Ascending aorta (tissue), 2 donors: ENCODE measurements at regions of chr4 and their contacts with region 1.

Region 1: DNA sequence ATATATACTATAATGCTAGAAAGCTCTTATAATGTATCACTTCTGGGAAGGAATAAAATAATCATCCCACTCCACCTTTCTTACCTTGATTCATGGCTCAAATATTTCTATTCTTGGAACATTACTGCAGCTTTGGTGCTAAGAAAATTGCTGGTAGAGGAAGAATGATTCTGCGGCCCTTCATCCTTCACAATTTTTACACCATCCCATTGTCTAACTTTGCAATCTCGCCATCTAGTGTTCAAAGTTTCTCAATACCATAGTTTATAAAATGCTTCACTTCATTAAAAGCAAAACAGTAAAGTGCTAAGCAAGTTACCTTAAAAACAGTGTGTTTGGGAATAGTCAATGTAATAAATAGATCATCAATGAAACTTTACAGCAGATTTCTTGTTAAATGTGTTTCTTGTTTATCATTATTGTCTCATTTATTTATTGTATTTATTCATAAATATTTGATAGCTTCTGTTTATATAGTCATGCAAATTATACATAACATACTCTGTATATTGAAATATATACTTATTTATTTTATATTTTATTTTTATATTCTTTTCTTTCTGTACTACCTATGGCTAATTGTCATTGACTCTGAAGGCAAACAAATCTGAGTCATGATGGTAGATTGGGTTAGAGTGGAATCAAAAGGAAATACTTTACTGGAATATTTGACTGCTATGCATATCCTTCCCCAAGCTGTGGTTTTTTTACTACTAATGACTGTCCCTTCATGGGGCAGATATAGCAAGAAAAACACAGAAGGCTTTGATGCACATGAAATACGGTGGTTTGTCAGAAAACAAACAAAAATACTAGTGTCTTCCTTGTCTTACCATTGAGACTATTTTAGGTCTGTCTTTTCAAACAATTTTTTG is 390.7 kb downstream of the MAPK10 start:
- DNase-seq: no peak
- H3K4me3 ChIP-seq: no peak overlapping the region
- H3K27ac ChIP-seq: peak overlapping the region in 1 of 2 donors; percentile 26
- H3K4me1 ChIP-seq: peaks cover 0 to 6% of the 10 kb centered on the region in 2 donors
- H3K27me3 ChIP-seq: no peaks in the 10 kb centered on the region
- CTCF ChIP-seq: peak; percentile 26 to 63 (median 58)

Region 2: GRCh38 chr4:85756938-85757337 is 212.2 kb before region 1 on chr4:
- intact Hi-C with region 1: loop called (anchors 5 kb)
- DNase-seq: no peak
- H3K4me3 ChIP-seq: no peak overlapping the region
- H3K27ac ChIP-seq: no peak overlapping the region
- H3K4me1 ChIP-seq: peaks cover 0 to 8% of the 10 kb centered on the region in 2 donors
- H3K27me3 ChIP-seq: no peaks in the 10 kb centered on the region
- CTCF ChIP-seq: peak; percentile 9 to 42 (median 25)

Region 3: GRCh38 chr4:85798012-85798770 is 171.0 kb before region 1 on chr4:
- intact Hi-C with region 1: loop called (anchors 2 kb)
- DNase-seq: no peak
- H3K4me3 ChIP-seq: no peak overlapping the region
- H3K27ac ChIP-seq: peak overlapping the region in 1 of 2 donors; percentile 66
- H3K4me1 ChIP-seq: peaks cover 0 to 14% of the 10 kb centered on the region in 2 donors
- H3K27me3 ChIP-seq: no peaks in the 10 kb centered on the region
- CTCF ChIP-seq: no peak

Region 4: DNA sequence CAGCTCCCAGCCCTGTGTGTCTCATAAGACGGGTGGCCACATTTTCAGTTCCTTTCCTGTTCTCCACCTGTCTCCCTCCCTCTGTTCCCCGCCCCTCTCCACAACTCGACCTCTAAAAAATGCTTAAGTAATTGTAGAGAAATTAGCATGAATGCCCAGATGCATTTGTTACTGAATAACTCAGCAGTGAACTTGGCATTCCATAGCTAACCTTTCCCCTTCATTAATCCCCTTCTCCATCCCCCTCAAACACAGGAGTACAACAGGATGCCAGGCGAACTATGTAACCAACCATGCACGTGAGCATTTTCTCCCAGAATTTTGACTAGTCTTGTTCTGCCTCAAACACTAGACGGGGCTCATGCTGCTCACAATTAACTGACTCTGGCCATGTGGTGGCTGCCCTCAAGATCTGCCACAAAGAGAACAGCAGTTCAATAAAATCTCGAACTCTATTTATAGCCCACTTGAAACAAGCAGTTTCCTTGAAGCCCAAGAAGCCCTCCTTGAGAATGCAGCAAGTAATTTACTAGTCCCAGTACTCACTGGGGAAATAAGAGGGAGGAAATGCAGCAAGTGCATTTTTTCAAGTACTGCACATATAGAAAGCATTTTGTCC is 143.0 kb before region 1 on chr4:
- intact Hi-C with region 1: loop called (anchors 2 kb)
- DNase-seq: peak in 1 of 2 donors; percentile 74
- H3K4me3 ChIP-seq: no peak overlapping the region
- H3K27ac ChIP-seq: peak overlapping the region; percentile 10 to 62
- H3K4me1 ChIP-seq: peaks cover 16 to 25% of the 10 kb centered on the region in 2 donors
- H3K27me3 ChIP-seq: no peaks in the 10 kb centered on the region
- CTCF ChIP-seq: peak in 2 of 3 experiments; percentile 37 to 40